Prostate gland (tissue), 2 donors: ENCODE measurements at regions of chr9 and their contacts with region 1.

Region 1: DNA sequence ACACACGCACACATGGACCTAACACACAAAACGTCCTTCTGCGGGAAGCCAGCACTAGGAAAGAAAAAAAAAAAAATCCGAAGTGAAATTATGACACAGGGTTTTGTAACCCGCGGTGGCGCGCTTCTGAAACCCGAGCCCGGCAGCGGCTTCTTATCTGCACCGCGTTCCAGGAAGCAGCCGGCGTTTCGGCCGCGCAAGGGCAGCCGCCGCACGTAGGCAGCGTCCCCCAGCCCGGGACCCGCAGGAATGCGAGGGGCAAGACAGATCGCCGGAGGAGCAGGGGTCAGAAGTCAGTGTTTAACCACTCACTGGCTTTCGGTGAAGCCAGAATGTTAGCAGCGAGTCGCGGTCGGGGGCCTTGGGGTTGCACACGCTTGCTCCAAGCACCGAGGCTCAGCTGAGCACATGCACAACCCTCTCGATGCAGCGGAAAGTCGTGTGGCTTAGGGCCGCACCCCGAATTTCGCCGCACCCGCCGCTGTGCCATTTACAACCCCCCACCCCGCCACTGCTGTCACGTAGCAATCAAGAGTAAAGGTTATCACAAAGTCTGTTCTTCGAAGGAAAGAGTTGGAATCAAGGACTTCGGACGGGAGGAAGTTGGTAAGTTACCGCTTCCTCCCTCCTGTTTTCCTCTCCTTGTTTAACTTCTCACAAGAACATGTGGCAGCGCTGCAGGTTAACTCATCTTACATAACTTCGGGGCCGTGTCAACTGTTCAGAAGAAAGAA is 167.9 kb downstream of the AUH start:
- DNase-seq: peak; percentile 72
- H3K4me3 ChIP-seq: peak overlapping the region; percentile 15 to 29
- H3K27ac ChIP-seq: peak overlapping the region; percentile 90 to 92
- H3K4me1 ChIP-seq: peaks cover 10% of the 10 kb centered on the region
- H3K27me3 ChIP-seq: no peaks in the 10 kb centered on the region
- CTCF ChIP-seq: peak in 1 of 4 experiments; percentile 9
- POLR2A ChIP-seq: peak; percentile 29

Region 2: GRCh38 chr9:91117959-91118703 is 75.7 kb before region 1 on chr9:
- intact Hi-C with region 1: loop called (anchors 5 kb)
- DNase-seq: peak; percentile 15
- H3K4me3 ChIP-seq: no peak overlapping the region
- H3K27ac ChIP-seq: no peak overlapping the region
- H3K4me1 ChIP-seq: no peaks in the 10 kb centered on the region
- H3K27me3 ChIP-seq: no peaks in the 10 kb centered on the region
- CTCF ChIP-seq: no peak
- POLR2A ChIP-seq: no peak

Region 3: DNA sequence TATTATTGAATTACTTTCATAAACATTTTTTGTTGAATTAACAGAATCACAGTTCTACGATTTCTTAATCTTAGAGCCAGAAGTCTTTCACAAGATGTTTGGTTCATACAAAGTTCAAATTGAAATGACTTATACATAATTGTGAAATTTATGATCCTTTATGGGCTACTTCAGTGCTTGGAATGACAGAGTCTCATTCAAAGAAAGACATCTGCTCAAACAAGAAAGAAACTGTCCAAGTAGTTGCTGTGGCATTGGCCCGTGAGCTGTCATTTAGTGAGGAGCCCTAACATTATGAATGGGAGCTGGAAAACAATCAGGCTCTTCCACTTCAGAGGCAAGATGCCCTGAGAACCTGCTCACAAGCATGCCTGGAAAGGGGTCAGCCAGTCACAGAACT is 104.5 kb after region 1 on chr9:
- intact Hi-C with region 1: loop called (anchors 2 kb)
- DNase-seq: no peak
- H3K4me3 ChIP-seq: no peak overlapping the region
- H3K27ac ChIP-seq: no peak overlapping the region
- H3K4me1 ChIP-seq: no peaks in the 10 kb centered on the region
- H3K27me3 ChIP-seq: no peaks in the 10 kb centered on the region
- CTCF ChIP-seq: no peak
- POLR2A ChIP-seq: no peak

Region 4: GRCh38 chr9:91422758-91423711 is 229.2 kb after region 1 on chr9:
- intact Hi-C with region 1: loop called (anchors 2 kb)
- DNase-seq: peak; percentile 79
- H3K4me3 ChIP-seq: peak overlapping the region; percentile 76 to 79
- H3K27ac ChIP-seq: peak overlapping the region; percentile 92
- H3K4me1 ChIP-seq: no peaks in the 10 kb centered on the region
- H3K27me3 ChIP-seq: no peaks in the 10 kb centered on the region
- CTCF ChIP-seq: no peak
- POLR2A ChIP-seq: peak; percentile 52